ENCODE measurements at regions of chr15 and their contacts with region 1.

Region 1: DNA sequence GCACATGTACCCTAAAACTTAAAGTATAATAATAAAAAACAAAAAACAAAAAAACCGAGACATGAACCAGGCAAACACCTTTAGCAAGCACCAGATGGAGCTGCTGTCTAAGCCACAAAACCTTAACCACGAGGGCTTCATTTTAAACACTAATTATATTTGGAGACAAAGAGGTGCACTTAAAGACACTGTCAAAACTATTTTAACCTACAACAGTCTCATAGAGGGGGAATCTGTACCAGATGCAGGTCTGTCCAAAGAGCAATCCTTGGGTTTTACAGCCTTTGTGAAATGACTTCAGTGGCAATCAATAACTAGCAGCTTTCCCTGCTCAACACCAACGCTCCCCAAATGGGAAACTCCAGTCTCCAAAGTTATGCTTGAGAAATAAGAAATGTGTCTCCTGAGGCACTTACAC is 115.7 kb upstream of the TSPAN3 start:
- DNase-seq: peak; percentile 48
- H3K4me3 ChIP-seq: no peak overlapping the region
- H3K27ac ChIP-seq: no peak overlapping the region
- H3K4me1 ChIP-seq: peaks cover 49% of the 10 kb centered on the region
- CTCF ChIP-seq: peak; percentile 81

Region 2: GRCh38 chr15:77419836-77420609 is 233.4 kb after region 1 on chr15 and contains the start of gene PEAK1:
- CTCF ChIA-PET with region 1: no interaction called
- POLR2A ChIA-PET with region 1: interaction called, 3 read pairs
- intact Hi-C with region 1: loop called (anchors 5 kb)
- DNase-seq: peak; percentile 98
- H3K4me3 ChIP-seq: peak within 1 kb of the TSS; percentile 88
- H3K27ac ChIP-seq: peak within 1 kb of the TSS; percentile 80
- H3K4me1 ChIP-seq: peaks cover 22% of the 10 kb centered on the region
- CTCF ChIP-seq: no peak
- total RNA-seq, gene PEAK1: 6.0 and 8.9 TPM in 2 replicates

Measured in OCI-LY7 (cell line).